ENCODE measurements at regions of chr17 and their contacts with region 1.

Region 1: GRCh38 chr17:63549946-63550807 is at the start of gene DCAF7:
- DNase-seq: peak; percentile 100
- ATAC-seq: peak; percentile 92
- H3K4me3 ChIP-seq: peak within 1 kb of the TSS; percentile 95 to 99 (median 98)
- H3K27ac ChIP-seq: peak within 1 kb of the TSS; percentile 92
- H3K4me1 ChIP-seq: peaks cover 59% of the 10 kb centered on the region
- H3K27me3 ChIP-seq: peaks cover 0 to 2% of the 10 kb centered on the region in 2 experiments; a peak in 2 of 5 replicates
- CTCF ChIP-seq: peak; percentile 37
- EP300 ChIP-seq: peak in 1 of 2 experiments; percentile 10; a peak in 1 of 4 replicates
- POLR2A ChIP-seq: peak; percentile 84 to 92
- RAD21 ChIP-seq: peak; percentile 42
- total RNA-seq, gene DCAF7: 55.2 and 77.5 TPM in 2 replicates

Region 2: DNA sequence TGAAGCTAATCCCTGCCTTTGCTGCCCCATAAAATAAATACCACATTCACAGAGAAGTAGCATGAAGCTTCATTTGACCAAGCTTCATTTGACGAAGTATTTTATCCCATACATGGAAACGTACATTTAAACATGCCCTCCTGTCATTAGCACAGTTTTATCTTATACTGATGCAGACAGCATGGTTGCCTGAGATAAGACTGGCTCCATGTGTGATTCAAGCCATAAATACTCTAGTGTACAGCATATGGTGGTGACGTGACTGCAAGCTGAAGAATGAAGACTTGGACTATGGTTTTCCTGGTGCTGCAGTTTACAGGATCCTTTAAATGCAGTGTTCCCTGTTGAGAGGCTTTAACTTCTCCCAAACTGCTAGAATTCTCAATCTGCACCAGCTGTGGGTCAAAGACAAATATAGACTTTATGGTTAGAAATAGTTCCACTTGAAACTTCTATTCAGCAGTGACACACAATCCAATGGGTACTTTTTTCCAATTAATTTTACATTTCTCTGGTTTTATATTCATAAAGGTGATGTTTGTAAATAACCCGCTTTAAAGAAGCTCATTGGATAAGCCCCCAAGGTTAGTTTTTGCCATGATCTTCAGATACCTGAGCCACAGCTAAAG is 169.0 kb before region 1 on chr17:
- CTCF ChIA-PET with region 1: no interaction called
- POLR2A ChIA-PET with region 1: no interaction called
- in situ Hi-C with region 1: no loop called
- intact Hi-C with region 1: no loop called
- DNase-seq: no peak
- ATAC-seq: no peak
- H3K4me3 ChIP-seq: no peak overlapping the region
- H3K27ac ChIP-seq: no peak overlapping the region
- H3K4me1 ChIP-seq: no peaks in the 10 kb centered on the region
- H3K27me3 ChIP-seq: peaks cover 0 to 8% of the 10 kb centered on the region in 2 experiments; a peak in 2 of 5 replicates
- CTCF ChIP-seq: no peak
- EP300 ChIP-seq: no peak
- POLR2A ChIP-seq: no peak
- RAD21 ChIP-seq: no peak

Region 3: DNA sequence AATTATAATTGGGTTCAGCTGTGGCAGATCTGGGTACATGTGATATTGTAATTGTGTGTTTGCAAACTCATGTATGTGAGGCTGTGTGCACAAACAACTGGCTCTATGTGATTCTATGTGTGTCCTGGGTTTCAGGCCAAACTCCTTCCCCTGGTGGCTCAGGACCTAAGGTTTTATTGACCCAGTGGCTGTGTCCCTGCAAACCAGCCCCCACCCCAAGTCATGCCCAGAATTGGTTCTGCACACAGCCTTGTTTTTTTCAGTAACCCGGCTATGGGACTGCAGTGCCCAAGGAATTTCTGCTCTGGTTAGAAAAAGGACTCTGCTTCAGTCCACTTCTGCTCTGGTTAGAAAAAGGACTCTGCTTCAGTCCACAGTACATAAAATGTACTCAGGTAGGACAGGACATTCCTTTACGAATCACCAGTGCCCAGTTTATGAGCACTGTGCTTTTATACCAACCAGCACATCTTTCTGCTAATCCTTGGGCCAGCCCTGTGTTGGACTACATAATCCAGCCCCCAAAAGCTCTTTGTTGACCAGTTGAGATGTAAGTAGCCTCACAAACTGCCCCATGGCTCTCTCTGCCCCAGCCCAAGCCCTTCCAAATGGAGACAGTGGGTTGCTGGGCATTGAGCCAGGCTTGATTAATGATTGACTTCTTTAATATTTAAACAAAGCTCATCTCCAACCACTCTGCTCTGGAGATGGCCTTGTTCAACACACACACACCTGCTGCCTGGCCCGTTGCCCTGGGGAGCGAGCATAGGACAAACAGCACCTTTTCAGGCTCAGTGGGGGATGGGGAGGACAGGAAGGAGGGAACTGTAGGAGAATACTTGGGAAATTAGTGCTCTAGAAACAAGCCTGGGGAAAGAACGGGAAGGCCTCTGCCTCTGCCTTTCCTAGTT is 29.9 kb before region 1 on chr17:
- CTCF ChIA-PET with region 1: no interaction called
- POLR2A ChIA-PET with region 1: interaction called, 8 read pairs
- in situ Hi-C with region 1: no loop called
- intact Hi-C with region 1: loop called (anchors 1 kb)
- DNase-seq: peak; percentile 96
- ATAC-seq: peak; percentile 84
- H3K4me3 ChIP-seq: peak overlapping the region in 1 of 3 experiments; percentile 47; a peak in 2 of 6 replicates
- H3K27ac ChIP-seq: peak overlapping the region; percentile 71
- H3K4me1 ChIP-seq: peaks cover 79% of the 10 kb centered on the region
- H3K27me3 ChIP-seq: peaks cover 7 to 55% of the 10 kb centered on the region in 2 experiments; a peak in 4 of 5 replicates
- CTCF ChIP-seq: no peak
- EP300 ChIP-seq: peak; percentile 49 to 88; a peak in 3 of 4 replicates
- POLR2A ChIP-seq: peak in 1 of 2 experiments; percentile 24; a peak in 2 of 4 replicates
- RAD21 ChIP-seq: no peak

Region 4: DNA sequence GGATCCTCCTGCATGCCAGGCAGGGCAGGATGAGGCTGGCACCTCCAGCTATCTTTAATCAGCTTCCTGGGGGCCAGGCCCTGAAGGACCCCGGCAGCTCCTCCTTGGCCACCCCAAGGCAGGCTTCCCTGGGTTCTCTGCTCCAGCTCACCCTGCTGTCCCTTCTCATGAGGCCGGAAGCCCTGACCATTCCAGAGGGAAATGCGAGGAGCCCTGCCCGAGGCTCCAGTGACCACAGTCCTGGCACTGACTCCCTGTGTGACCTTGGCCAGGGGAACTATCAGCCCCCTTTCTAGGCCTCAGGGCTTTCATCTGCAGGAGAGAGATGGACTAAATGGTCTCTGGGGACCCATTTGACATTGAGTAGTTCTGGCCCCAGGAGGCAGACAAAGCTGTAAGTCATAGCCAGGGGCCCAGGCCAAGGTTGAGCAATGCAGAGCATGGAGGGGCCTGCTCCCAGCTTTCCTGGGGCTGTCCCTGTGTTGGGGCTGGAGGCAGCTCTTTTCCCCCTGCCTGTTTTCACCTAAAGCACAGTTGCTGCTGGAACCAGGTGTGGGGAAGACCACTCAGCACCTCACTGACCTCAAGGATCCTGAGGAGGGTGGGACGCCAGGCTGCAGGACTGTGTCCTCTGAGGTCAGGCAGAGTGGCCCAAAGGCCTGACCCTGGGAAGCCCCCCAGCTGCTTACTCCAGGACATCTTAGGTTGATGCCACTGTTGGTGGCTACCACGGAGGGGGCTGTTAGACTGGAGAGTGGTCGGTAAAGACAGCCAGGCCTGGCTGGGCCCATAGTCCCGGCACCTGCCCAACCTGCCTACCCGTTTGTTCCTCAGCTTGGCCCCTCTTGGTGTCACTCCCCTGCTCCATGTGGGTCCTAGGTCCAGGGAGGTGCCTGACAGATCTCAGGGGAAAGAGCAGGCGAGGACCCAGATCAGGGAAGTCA is 18.9 kb before region 1 on chr17:
- CTCF ChIA-PET with region 1: no interaction called
- POLR2A ChIA-PET with region 1: interaction called, 19 read pairs
- in situ Hi-C with region 1: no loop called
- intact Hi-C with region 1: loop called (anchors 1 kb)
- DNase-seq: peak; percentile 89
- ATAC-seq: peak; percentile 81
- H3K4me3 ChIP-seq: peak overlapping the region in 1 of 3 experiments; percentile 46; a peak in 1 of 6 replicates
- H3K27ac ChIP-seq: peak overlapping the region; percentile 69
- H3K4me1 ChIP-seq: peaks cover 40% of the 10 kb centered on the region
- H3K27me3 ChIP-seq: peaks cover 4 to 33% of the 10 kb centered on the region in 2 experiments; a peak in 4 of 5 replicates
- CTCF ChIP-seq: 0 out of 2 replicates have a peak, but pooled peaks have one; percentile 28
- EP300 ChIP-seq: peak; percentile 54 to 93; a peak in 3 of 4 replicates
- POLR2A ChIP-seq: no peak
- RAD21 ChIP-seq: no peak; the same call in 1 of the 2 replicates

Region 5: DNA sequence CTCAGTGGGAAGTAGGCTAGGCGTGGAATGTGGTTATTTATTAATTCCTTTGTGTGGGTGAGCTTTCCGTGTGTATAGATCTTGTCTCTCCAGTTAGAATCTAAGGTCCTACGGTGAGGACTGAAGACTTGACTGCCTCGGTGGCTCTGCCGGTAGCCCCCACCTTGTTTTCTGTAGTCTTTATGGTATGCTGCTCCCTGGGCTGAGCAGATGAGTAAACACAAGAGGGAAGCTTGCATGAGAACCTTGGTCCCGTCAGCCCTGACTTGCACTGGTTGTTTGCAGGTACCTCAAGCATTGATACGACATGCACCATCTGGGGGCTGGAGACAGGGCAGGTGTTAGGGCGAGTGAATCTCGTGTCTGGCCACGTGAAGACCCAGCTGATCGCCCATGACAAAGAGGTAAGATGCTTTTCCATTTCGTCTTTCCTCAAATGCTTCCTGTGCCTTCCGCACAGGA is 29.4 kb after region 1 on chr17:
- CTCF ChIA-PET with region 1: no interaction called
- POLR2A ChIA-PET with region 1: interaction called, 20 read pairs
- in situ Hi-C with region 1: no loop called
- intact Hi-C with region 1: loop called (anchors 2 kb)
- DNase-seq: peak; percentile 83
- ATAC-seq: peak; percentile 58
- H3K4me3 ChIP-seq: peak overlapping the region in 2 of 3 experiments; percentile 8 to 33; a peak in 2 of 6 replicates
- H3K27ac ChIP-seq: peak overlapping the region; percentile 83
- H3K4me1 ChIP-seq: peaks cover 46% of the 10 kb centered on the region
- H3K27me3 ChIP-seq: no peaks in the 10 kb centered on the region
- CTCF ChIP-seq: peak; percentile 31; the same call in 1 of the 2 replicates
- EP300 ChIP-seq: peak in 1 of 2 experiments; percentile 53; a peak in 2 of 4 replicates
- POLR2A ChIP-seq: no peak
- RAD21 ChIP-seq: no peak

Region 6: DNA sequence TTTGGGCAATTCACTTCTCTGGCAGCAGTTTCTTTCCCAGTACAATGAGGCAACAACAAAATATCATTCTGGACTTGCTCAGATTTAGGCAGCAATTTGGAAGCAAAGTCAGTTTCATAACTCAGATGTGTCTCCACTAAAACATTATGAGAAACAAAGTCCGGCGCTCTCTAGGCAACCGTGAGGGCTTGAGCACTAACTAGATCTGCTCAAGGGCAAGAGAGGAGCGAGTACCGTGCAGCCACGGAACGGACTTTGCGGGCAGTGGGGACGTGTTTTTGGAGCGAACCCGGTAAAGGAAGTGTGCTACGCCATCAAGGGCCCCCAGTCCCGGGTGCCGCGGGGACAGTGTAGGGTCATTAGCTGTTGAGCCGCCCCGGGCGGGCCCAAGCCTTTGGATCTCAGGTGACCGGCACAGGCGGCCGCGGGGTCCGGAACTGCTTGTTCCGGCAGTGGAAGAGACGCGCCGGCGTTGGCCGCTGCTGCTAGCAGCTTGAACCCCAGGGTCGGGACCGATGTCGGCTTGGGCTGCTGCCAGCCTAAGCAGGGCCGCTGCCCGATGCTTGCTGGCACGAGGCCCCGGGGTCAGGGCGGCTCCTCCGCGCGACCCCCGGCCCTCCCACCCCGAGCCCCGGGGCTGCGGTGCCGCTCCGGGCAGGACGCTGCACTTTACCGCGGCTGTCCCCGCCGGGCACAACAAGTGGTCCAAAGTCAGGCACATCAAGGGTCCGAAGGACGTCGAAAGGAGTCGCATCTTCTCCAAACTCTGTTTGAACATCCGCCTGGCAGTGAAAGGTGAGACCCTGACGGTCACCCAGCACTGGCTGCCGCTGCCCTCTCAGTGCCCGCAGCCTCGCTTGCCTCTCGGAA is 50.6 kb after region 1 on chr17 and contains the start of gene TACO1:
- CTCF ChIA-PET with region 1: no interaction called
- POLR2A ChIA-PET with region 1: interaction called, 13 read pairs
- in situ Hi-C with region 1: no loop called
- intact Hi-C with region 1: loop called (anchors 2 kb)
- DNase-seq: peak; percentile 83
- ATAC-seq: peak; percentile 94
- H3K4me3 ChIP-seq: peak within 1 kb of the TSS; percentile 78 to 90 (median 81)
- H3K27ac ChIP-seq: peak within 1 kb of the TSS; percentile 88
- H3K4me1 ChIP-seq: peaks cover 23% of the 10 kb centered on the region
- H3K27me3 ChIP-seq: no peaks in the 10 kb centered on the region; a peak in 1 of 5 replicates
- CTCF ChIP-seq: peak; percentile 41
- EP300 ChIP-seq: peak; percentile 74 to 81
- POLR2A ChIP-seq: peak; percentile 75 to 88
- RAD21 ChIP-seq: peak; percentile 75
- total RNA-seq, gene TACO1: 53.6 and 57.6 TPM in 2 replicates

Region 7: DNA sequence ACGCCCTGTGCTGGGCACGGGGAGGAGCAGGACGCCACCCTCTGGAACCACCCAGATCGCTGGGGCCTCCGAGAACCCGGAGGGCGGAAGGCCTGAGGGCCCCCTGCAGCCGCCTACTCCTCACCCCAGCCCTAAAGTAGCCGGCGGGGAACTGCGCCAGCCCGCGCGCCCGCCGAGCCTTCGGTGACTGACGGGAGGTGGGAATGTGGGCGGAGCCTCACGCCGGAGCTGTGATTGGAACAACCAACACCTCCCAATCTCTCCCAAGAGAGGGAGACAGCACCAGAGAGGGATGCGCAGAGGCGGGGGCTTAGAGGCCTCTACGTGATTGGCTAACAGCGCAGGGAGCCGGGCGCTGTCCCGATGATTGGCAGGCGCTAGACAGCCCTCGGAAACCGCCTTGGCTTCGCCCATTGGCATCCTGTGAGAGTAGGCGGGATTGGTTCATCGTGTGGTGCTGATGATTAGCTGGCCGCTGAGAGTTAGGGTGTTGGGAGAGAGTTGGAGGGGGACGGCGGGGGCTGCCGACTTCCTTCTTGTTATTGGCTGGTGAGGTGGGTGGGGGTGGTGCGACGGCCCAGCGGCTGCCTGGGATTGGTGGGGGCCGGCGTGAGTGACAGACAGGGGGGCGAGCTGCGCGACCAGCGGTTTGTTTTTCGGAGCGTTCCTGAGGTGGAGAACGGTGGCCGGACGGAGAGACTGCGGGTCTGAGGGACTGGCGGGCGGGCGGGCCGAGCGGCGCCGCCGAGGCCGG is 71.8 kb after region 1 on chr17 and contains the start of gene MAP3K3:
- CTCF ChIA-PET with region 1: no interaction called
- POLR2A ChIA-PET with region 1: interaction called, 11 read pairs
- in situ Hi-C with region 1: no loop called
- intact Hi-C with region 1: loop called (anchors 1 kb)
- DNase-seq: peak; percentile 100
- ATAC-seq: peak; percentile 95
- H3K4me3 ChIP-seq: peak within 1 kb of the TSS; percentile 80 to 97 (median 85)
- H3K27ac ChIP-seq: peak within 1 kb of the TSS; percentile 42
- H3K4me1 ChIP-seq: peaks cover 43% of the 10 kb centered on the region
- H3K27me3 ChIP-seq: peaks cover 0 to 4% of the 10 kb centered on the region in 2 experiments; a peak in 1 of 5 replicates
- CTCF ChIP-seq: peak; percentile 58
- EP300 ChIP-seq: no peak
- POLR2A ChIP-seq: peak; percentile 68 to 94
- RAD21 ChIP-seq: peak; percentile 37; the same call in 1 of the 2 replicates
- total RNA-seq, gene MAP3K3: 15.9 and 21.8 TPM in 2 replicates

Region 8: GRCh38 chr17:63741221-63742049 is 191.3 kb after region 1 on chr17 and contains the start of gene STRADA:
- CTCF ChIA-PET with region 1: no interaction called
- POLR2A ChIA-PET with region 1: no interaction called
- in situ Hi-C with region 1: no loop called
- intact Hi-C with region 1: loop called (anchors 1 kb)
- DNase-seq: peak; percentile 96
- ATAC-seq: peak; percentile 96
- H3K4me3 ChIP-seq: peak within 1 kb of the TSS; percentile 75 to 99 (median 92)
- H3K27ac ChIP-seq: peak within 1 kb of the TSS; percentile 84
- H3K4me1 ChIP-seq: peaks cover 14% of the 10 kb centered on the region
- H3K27me3 ChIP-seq: no peaks in the 10 kb centered on the region; a peak in 1 of 5 replicates
- CTCF ChIP-seq: no peak
- EP300 ChIP-seq: no peak
- POLR2A ChIP-seq: peak; percentile 78 to 90
- RAD21 ChIP-seq: peak; percentile 45
- total RNA-seq, gene STRADA: 16.1 and 17.9 TPM in 2 replicates